Naive thymus-derived CD4-positive, alpha-beta T cell (primary cell): ENCODE measurements at regions of chr20 and their contacts with region 1.

Region 1: GRCh38 chr20:1685304-1686052 is 27.9 kb upstream of the SIRPG start:
- DNase-seq: peak in 1 of 9 donors; percentile 16
- ATAC-seq: peak; percentile 50
- H3K4me3 ChIP-seq: peak overlapping the region; percentile 65
- H3K4me3 Mint-ChIP-seq: peak overlapping the region; percentile 82 to 97 (median 92)
- H3K27ac ChIP-seq: peak overlapping the region; percentile 80
- H3K27ac Mint-ChIP-seq: peak overlapping the region; percentile 87 to 96 (median 94)
- H3K4me1 ChIP-seq: peaks cover 4 to 28% of the 10 kb centered on the region in 2 donors
- H3K4me1 Mint-ChIP-seq: peaks cover 39 to 89% (median 82%) of the 10 kb centered on the region in 7 donors
- H3K27me3 ChIP-seq: no peaks in the 10 kb centered on the region
- H3K27me3 Mint-ChIP-seq: no peaks in the 10 kb centered on the region

Region 2: DNA sequence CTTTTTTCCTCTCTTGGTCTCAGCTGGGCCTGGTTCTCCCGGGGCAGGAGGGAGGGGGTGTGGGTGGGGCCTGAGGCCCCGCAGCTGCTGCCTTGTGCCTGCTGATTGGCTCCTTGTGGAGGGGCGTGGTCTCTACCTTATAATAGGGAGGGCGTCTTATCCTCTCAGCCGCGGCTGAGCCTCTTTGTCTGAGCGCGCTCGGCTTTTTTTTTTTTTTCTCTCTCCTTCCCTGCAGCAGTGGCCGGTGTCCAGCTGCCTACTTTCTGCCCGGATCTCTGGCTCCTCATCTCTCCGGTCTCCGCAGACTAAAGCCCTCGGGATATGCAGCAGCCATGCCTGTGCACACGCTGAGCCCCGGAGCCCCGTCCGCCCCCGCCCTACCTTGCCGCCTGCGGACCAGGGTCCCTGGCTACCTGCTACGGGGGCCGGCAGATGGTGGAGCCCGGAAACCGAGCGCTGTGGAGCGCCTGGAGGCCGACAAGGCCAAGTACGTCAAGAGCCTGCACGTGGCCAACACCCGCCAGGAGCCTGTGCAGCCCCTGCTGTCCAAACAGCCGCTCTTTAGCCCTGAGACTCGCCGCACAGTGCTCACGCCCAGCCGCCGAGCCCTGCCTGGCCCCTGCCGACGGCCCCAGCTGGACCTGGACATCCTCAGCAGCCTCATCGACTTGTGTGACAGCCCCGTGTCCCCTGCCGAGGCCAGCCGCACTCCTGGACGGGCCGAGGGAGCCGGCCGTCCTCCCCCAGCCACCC is 840.8 kb before region 1 on chr20:
- CTCF ChIA-PET with region 1: no interaction called
- POLR2A ChIA-PET with region 1: no interaction called
- intact Hi-C with region 1: loop called in 1 of 2 experiments (anchors 10 kb)
- DNase-seq: peak; percentile 55 to 95 (median 83)
- ATAC-seq: peak; percentile 98
- H3K4me3 ChIP-seq: peak overlapping the region; percentile 75
- H3K4me3 Mint-ChIP-seq: peak overlapping the region; percentile 88 to 97 (median 94)
- H3K27ac ChIP-seq: peak overlapping the region; percentile 70
- H3K27ac Mint-ChIP-seq: peak overlapping the region in 8 of 9 donors; percentile 70 to 93 (median 86)
- H3K4me1 ChIP-seq: peaks cover 40 to 45% of the 10 kb centered on the region in 2 donors
- H3K4me1 Mint-ChIP-seq: peaks cover 30 to 58% (median 52%) of the 10 kb centered on the region in 7 donors
- H3K27me3 ChIP-seq: no peaks in the 10 kb centered on the region
- H3K27me3 Mint-ChIP-seq: no peaks in the 10 kb centered on the region

Region 3: DNA sequence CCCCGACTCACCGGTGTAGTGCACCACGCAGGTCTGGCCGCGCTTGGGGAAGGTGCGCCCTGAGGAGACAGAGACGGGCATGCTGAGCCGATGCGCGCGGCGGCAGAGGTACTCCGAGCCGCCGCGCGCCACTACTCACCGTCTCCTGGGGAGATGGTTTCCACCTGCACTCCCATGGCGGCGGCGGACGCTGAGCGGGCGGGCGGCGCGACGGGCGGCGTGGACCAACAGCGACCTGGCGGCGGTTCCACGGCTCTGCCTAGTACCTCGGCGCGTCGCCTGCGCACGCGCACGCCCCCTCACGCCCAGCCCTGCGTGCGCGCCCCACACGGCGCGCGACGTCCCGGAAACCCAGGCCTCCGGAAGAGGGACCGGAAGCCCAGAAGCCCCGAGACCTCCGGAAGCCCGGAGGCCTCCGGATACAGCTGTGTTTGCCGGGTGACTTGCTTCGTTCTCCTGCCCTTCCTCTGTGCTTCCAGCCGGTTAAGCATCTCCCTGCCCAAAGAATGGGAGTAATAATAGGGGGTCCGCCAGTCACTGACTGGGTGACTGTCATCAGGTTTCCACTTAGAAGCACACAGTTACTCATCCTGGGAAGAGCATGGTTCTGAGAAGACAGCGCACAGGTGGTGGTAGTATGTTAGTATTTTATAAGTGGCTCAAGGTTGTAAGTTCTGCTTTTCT is 292.5 kb before region 1 on chr20 and contains the start of gene FKBP1A:
- CTCF ChIA-PET with region 1: no interaction called
- POLR2A ChIA-PET with region 1: no interaction called
- intact Hi-C with region 1: no loop called
- DNase-seq: peak; percentile 80 to 92 (median 89)
- ATAC-seq: peak; percentile 96
- H3K4me3 ChIP-seq: peak within 1 kb of the TSS; percentile 74
- H3K4me3 Mint-ChIP-seq: peak within 1 kb of the TSS; percentile 79 to 98 (median 94)
- H3K27ac ChIP-seq: peak within 1 kb of the TSS; percentile 82
- H3K27ac Mint-ChIP-seq: peak within 1 kb of the TSS; percentile 91 to 99 (median 96)
- H3K4me1 ChIP-seq: peaks cover 39 to 44% of the 10 kb centered on the region in 2 donors
- H3K4me1 Mint-ChIP-seq: peaks cover 45 to 82% (median 75%) of the 10 kb centered on the region in 7 donors
- H3K27me3 ChIP-seq: no peaks in the 10 kb centered on the region
- H3K27me3 Mint-ChIP-seq: peaks cover 0 to 30% (median 0%) of the 10 kb centered on the region in 5 donors
- total RNA-seq, gene FKBP1A: 74.5 to 253 (median 93.1) TPM

Region 4: DNA sequence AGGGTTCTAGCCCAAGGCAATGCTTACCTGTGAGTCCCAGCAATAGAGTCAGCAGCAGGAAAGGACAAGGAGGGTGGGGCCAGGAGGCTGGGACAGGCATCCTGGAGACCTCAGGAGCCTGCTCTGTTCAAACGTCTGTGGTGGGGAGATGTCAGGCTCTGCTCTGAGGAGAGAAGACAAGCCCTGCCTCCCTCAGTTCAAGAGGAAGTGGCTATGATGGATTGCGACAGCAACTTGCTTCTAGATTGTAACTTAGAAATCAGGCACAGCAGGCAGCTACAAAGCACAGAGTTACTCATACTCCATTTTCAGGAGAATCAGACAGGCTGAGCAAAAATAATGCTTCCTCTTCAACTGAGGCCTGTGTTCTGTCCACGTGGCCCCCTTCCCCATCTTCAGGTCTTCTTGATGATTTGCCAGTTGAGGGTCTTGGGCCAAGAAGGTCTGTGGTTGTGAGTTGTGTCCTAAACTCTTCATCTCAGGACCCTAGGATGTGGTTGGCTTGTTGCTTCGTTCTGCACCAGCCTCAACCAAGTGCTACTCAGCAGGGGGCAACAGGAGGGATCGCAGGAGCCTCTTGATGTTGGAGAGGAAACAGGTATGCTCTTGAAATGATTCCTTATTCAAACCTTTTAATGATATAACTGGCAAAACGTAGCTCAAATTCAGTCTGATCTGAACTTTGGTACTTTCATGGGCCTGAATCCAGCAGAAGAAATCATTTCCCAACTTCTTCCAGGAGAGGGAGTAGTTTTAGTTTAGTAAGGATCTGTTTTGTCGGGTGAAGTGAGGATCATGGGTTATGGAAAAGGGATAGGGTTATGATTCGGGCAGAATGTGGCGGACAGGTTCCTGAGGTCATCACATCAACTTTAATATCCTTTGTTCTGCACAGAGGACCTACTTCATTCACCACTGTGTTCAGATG is 96.7 kb before region 1 on chr20:
- CTCF ChIA-PET with region 1: no interaction called
- POLR2A ChIA-PET with region 1: no interaction called
- intact Hi-C with region 1: no loop called
- DNase-seq: peak in 3 of 9 donors; percentile 23 to 64 (median 56)
- ATAC-seq: no peak
- H3K4me3 ChIP-seq: no peak overlapping the region
- H3K4me3 Mint-ChIP-seq: peak overlapping the region in 4 of 10 donors; percentile 67 to 76 (median 70)
- H3K27ac ChIP-seq: no peak overlapping the region
- H3K27ac Mint-ChIP-seq: peak overlapping the region in 3 of 9 donors; percentile 88 to 91 (median 90)
- H3K4me1 ChIP-seq: peaks cover 0 to 5% of the 10 kb centered on the region in 2 donors
- H3K4me1 Mint-ChIP-seq: peaks cover 0 to 41% (median 0%) of the 10 kb centered on the region in 7 donors
- H3K27me3 ChIP-seq: no peaks in the 10 kb centered on the region
- H3K27me3 Mint-ChIP-seq: no peaks in the 10 kb centered on the region

Region 5: DNA sequence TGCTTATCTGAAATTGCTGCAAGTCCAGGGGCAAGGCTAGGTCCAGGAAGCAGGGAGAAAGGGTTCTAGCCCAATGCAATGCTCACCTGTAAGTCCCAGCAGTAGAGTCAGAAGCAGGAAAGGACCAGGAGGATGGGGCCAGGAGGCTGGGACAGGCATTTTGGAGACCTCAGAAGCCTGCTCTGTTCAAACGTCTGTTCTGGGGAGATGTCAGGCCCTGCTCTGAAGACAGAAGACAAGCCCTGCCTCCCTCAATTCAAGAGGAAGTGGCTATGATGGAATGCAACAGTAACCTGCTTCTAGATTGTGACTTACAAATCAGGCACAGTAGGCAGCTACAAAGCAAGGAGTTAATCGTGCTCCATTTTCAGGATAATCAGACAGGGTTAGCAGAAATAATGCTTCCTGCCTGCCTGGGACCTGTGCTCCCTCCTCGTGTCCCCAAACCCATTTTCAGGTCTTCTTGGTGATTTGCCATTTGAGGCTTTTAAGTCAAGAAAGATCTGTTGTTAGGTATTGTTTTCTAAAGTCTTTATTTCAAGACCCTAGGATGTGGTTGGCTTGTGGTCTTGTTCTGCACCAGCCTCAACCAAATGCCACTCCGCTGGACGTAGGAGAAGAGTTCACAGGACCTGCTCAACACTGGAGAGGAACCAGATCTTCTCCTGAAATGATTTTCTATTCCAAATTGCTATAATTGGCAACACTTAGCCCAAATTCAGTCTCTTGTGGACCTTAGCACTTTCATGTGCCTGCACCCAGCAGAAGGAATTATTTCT is 27.7 kb before region 1 on chr20 and contains the start of gene SIRPG:
- CTCF ChIA-PET with region 1: no interaction called
- POLR2A ChIA-PET with region 1: interaction called, 171 read pairs
- intact Hi-C with region 1: loop called (anchors 1 to 5 kb)
- DNase-seq: peak in 6 of 9 donors; percentile 42 to 56 (median 48)
- ATAC-seq: peak; percentile 70
- H3K4me3 ChIP-seq: peak within 1 kb of the TSS; percentile 85
- H3K4me3 Mint-ChIP-seq: peak within 1 kb of the TSS; percentile 93 to 97 (median 96)
- H3K27ac ChIP-seq: peak within 1 kb of the TSS; percentile 87
- H3K27ac Mint-ChIP-seq: peak within 1 kb of the TSS; percentile 86 to 99 (median 95)
- H3K4me1 ChIP-seq: peaks cover 79 to 81% of the 10 kb centered on the region in 2 donors
- H3K4me1 Mint-ChIP-seq: peaks cover 46 to 95% (median 90%) of the 10 kb centered on the region in 7 donors
- H3K27me3 ChIP-seq: no peaks in the 10 kb centered on the region
- H3K27me3 Mint-ChIP-seq: no peaks in the 10 kb centered on the region
- total RNA-seq, gene SIRPG: 25.6 to 71.7 (median 50.2) TPM

Region 6: GRCh38 chr20:1669304-1669703 is 16.2 kb before region 1 on chr20:
- CTCF ChIA-PET with region 1: no interaction called
- POLR2A ChIA-PET with region 1: interaction called, 171 read pairs
- intact Hi-C with region 1: loop called (anchors 1 to 2 kb)
- DNase-seq: no peak
- ATAC-seq: no peak
- H3K4me3 ChIP-seq: no peak overlapping the region
- H3K4me3 Mint-ChIP-seq: peak overlapping the region in 1 of 10 donors; percentile 39
- H3K27ac ChIP-seq: peak overlapping the region; percentile 48
- H3K27ac Mint-ChIP-seq: peak overlapping the region; percentile 56 to 97 (median 92)
- H3K4me1 ChIP-seq: peaks cover 66 to 73% of the 10 kb centered on the region in 2 donors
- H3K4me1 Mint-ChIP-seq: peaks cover 59 to 100% (median 92%) of the 10 kb centered on the region in 7 donors
- H3K27me3 ChIP-seq: no peaks in the 10 kb centered on the region
- H3K27me3 Mint-ChIP-seq: no peaks in the 10 kb centered on the region

Region 7: GRCh38 chr20:1707588-1708449 is 22.3 kb after region 1 on chr20:
- CTCF ChIA-PET with region 1: interaction called, 5 read pairs
- POLR2A ChIA-PET with region 1: interaction called, 3 read pairs
- intact Hi-C with region 1: loop called in 1 of 2 experiments (anchors 2 kb)
- DNase-seq: peak in 5 of 9 donors; percentile 22 to 46 (median 37)
- ATAC-seq: peak; percentile 54
- H3K4me3 ChIP-seq: no peak overlapping the region
- H3K4me3 Mint-ChIP-seq: peak overlapping the region; percentile 9 to 89 (median 73)
- H3K27ac ChIP-seq: peak overlapping the region; percentile 54
- H3K27ac Mint-ChIP-seq: peak overlapping the region; percentile 68 to 96 (median 91)
- H3K4me1 ChIP-seq: peaks cover 0 to 17% of the 10 kb centered on the region in 2 donors
- H3K4me1 Mint-ChIP-seq: peaks cover 15 to 36% (median 33%) of the 10 kb centered on the region in 7 donors
- H3K27me3 ChIP-seq: no peaks in the 10 kb centered on the region
- H3K27me3 Mint-ChIP-seq: no peaks in the 10 kb centered on the region

Region 8: DNA sequence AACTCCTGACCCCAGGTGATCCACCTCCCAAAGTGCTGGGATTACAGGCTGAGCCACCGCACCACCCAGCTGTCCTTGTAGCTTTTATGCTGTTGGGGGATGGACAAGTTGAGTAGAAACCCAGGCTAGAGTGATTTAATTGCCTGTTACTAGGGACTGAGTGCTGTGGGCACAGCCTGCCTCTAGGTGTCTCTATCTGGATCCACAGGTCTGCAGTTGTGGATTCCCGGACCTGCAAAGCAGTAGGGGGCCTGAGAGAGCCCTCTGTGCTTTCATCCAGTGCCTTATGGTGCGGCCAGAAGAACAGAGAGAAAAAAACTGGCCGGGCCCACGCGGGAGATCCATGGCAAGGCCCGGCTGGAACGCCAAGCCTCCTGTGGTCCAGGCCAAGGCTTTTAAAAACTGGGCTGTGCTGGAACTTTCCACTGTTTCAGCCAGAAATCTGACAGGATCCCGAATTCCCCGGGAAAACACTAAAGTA is 214.9 kb after region 1 on chr20:
- CTCF ChIA-PET with region 1: no interaction called
- POLR2A ChIA-PET with region 1: no interaction called
- intact Hi-C with region 1: no loop called
- DNase-seq: no peak
- ATAC-seq: no peak
- H3K4me3 ChIP-seq: no peak overlapping the region
- H3K4me3 Mint-ChIP-seq: no peak overlapping the region
- H3K27ac ChIP-seq: no peak overlapping the region
- H3K27ac Mint-ChIP-seq: no peak overlapping the region
- H3K4me1 ChIP-seq: no peaks in the 10 kb centered on the region
- H3K4me1 Mint-ChIP-seq: peaks cover 0 to 9% (median 0%) of the 10 kb centered on the region in 7 donors
- H3K27me3 ChIP-seq: peaks cover 0 to 4% of the 10 kb centered on the region in 2 donors
- H3K27me3 Mint-ChIP-seq: peaks cover 37 to 53% (median 50%) of the 10 kb centered on the region in 5 donors